ENCODE measurements at regions of chr1 and their contacts with region 1.

Region 1: DNA sequence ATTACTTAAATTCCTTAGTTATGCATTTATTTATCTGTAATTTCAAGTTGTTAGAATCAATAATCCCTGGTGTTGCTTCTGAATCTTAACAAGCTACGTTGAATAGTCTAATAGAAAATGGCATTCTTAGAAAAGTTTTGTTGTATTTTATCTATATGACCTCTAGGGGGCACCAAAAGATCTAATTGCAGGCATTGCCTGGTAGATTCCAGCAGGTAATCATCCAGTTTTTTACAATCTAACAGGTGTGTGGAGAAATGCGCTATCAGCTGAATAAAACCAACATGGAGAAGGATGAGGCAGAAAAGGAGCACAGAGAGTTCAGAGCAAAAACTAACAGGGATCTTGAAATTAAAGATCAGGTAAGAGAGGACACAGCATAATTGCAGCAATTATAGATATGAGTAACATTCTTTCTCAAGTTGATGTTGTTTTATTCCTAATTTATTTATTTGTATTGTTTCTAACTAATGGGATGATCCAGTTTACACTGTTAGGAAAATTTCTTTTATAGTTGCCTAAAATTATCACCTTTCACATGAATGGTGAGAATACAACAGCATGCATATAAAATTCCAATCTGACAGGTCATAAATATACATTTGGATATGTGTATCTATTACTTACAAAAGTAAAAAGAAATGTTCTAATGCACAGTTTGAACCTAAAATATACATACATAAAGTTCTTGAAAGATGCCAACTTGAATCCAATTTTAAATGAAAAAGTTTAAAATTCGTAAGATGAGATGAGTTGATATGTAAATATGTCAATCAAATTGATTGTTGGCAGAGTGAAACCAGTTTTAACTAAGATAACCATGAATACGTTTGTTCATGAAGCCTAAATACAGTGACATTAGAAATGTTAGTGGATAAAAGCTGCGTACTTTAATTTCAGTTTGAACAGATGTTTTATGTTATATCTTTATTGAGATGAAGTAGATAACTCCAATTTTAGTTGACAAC is 88.4 kb downstream of the SDCCAG8 start:
- DNase-seq: peak in 3 of 14 experiments; percentile 56 to 68 (median 64)
- ATAC-seq: peak; percentile 46
- H3K4me3 ChIP-seq: no peak overlapping the region
- H3K4me3 Mint-ChIP-seq: no peak overlapping the region
- H3K27ac ChIP-seq: no peak overlapping the region
- H3K27ac Mint-ChIP-seq: no peak overlapping the region
- H3K4me1 ChIP-seq: no peaks in the 10 kb centered on the region
- H3K4me1 Mint-ChIP-seq: peaks cover 4% of the 10 kb centered on the region
- H3K27me3 ChIP-seq: no peaks in the 10 kb centered on the region
- H3K27me3 Mint-ChIP-seq: no peaks in the 10 kb centered on the region
- CTCF ChIP-seq: peak; percentile 90

Region 2: GRCh38 chr1:243748706-243749283 is 404.5 kb after region 1 on chr1:
- CTCF ChIA-PET with region 1: no interaction called
- POLR2A ChIA-PET with region 1: no interaction called
- intact Hi-C with region 1: loop called (anchors 2 to 5 kb)
- DNase-seq: peak in 4 of 14 experiments; percentile 16 to 81 (median 72)
- ATAC-seq: peak; percentile 98
- H3K4me3 ChIP-seq: no peak overlapping the region
- H3K4me3 Mint-ChIP-seq: no peak overlapping the region
- H3K27ac ChIP-seq: no peak overlapping the region
- H3K27ac Mint-ChIP-seq: peak overlapping the region; percentile 52
- H3K4me1 ChIP-seq: peaks cover 2% of the 10 kb centered on the region
- H3K4me1 Mint-ChIP-seq: peaks cover 59% of the 10 kb centered on the region
- H3K27me3 ChIP-seq: no peaks in the 10 kb centered on the region
- H3K27me3 Mint-ChIP-seq: no peaks in the 10 kb centered on the region
- CTCF ChIP-seq: peak; percentile 83

Region 3: DNA sequence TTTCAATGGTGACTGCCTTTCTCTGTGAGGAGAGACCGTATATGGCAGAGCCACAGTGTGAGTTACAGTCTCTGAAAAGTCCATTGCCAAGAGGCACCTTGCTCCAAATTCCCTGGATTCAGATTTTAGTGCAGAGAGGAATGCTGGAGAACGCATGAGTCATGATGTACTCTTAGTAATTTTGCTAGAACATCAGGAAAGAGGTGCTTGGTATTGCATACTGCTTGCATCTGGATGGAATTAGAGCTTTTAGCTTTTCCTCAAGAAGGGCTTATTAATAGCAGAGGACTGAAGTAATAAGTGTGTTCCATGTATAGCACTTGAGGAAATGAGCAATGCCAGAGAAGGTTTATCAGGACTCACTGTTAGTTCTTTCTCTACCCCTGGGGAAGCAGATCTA is 546.3 kb after region 1 on chr1:
- CTCF ChIA-PET with region 1: no interaction called
- POLR2A ChIA-PET with region 1: no interaction called
- intact Hi-C with region 1: no loop called
- DNase-seq: no peak
- ATAC-seq: no peak
- H3K4me3 ChIP-seq: no peak overlapping the region
- H3K4me3 Mint-ChIP-seq: no peak overlapping the region
- H3K27ac ChIP-seq: no peak overlapping the region
- H3K27ac Mint-ChIP-seq: no peak overlapping the region
- H3K4me1 ChIP-seq: no peaks in the 10 kb centered on the region
- H3K4me1 Mint-ChIP-seq: no peaks in the 10 kb centered on the region
- H3K27me3 ChIP-seq: no peaks in the 10 kb centered on the region
- H3K27me3 Mint-ChIP-seq: peaks cover 13% of the 10 kb centered on the region
- CTCF ChIP-seq: no peak

Region 4: DNA sequence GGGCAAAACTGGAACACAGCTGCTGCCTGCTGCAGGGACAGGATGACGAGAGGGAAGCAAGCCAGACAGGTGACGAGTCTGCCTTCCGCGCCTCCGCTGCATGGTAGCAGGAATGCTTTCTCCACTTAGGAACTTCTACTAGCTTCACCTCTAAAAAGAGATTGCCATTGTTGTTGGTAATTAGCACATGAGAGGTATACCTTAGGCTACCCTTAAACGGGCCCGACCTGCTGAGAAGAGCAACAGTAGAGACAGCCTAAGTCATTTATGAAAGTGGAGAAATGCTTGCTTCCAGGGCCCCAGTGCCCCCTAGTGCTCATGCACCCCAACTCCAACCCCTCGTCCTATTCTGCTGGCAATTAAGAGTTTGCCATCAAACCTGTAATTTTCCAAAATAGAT is 602.7 kb after region 1 on chr1:
- CTCF ChIA-PET with region 1: no interaction called
- POLR2A ChIA-PET with region 1: no interaction called
- intact Hi-C with region 1: loop called (anchors 1 to 2 kb)
- DNase-seq: peak; percentile 12 to 64 (median 32)
- ATAC-seq: peak; percentile 55
- H3K4me3 ChIP-seq: no peak overlapping the region
- H3K4me3 Mint-ChIP-seq: no peak overlapping the region
- H3K27ac ChIP-seq: no peak overlapping the region
- H3K27ac Mint-ChIP-seq: no peak overlapping the region
- H3K4me1 ChIP-seq: no peaks in the 10 kb centered on the region
- H3K4me1 Mint-ChIP-seq: no peaks in the 10 kb centered on the region
- H3K27me3 ChIP-seq: no peaks in the 10 kb centered on the region
- H3K27me3 Mint-ChIP-seq: no peaks in the 10 kb centered on the region
- CTCF ChIP-seq: peak; percentile 75

Region 5: DNA sequence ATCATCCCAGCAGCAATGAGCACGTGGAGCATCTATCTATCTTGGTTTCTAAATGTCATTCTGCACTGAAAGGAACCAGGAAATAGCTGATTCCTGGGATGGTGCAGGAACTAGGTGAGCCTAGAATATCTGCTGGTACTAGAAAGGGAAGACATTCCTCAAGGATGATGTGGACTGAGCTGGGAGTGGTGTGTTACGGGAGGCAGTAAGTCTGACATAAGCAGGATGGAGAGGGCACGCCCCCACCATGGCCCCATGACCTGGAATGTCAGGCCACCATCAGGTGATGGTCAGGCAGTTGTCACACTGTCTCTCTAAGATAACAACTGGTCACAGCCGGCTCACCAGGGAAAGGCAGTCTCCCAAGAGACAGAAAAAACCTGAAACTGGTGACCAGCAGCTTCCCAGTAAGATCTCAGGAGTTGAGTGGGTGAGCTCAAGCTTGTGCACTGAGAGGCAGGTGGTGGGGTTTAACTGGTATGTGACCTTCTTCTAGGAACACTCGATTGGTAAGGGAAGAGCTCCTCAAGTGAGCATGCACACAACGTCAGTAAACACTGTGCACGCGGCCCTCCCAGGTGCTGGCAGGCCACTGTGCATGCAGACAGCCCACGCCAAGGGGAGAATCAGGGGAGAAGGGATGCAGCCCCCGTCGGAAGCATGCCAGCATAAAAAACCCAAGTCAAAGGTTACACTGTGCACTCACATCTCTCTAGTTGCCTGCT is 958.8 kb after region 1 on chr1:
- CTCF ChIA-PET with region 1: interaction called, 6 read pairs
- POLR2A ChIA-PET with region 1: no interaction called
- intact Hi-C with region 1: loop called in 1 of 2 experiments (anchors 1 kb)
- DNase-seq: no peak
- ATAC-seq: no peak
- H3K4me3 ChIP-seq: no peak overlapping the region
- H3K4me3 Mint-ChIP-seq: no peak overlapping the region
- H3K27ac ChIP-seq: no peak overlapping the region
- H3K27ac Mint-ChIP-seq: no peak overlapping the region
- H3K4me1 ChIP-seq: peaks cover 14% of the 10 kb centered on the region
- H3K4me1 Mint-ChIP-seq: peaks cover 8% of the 10 kb centered on the region
- H3K27me3 ChIP-seq: no peaks in the 10 kb centered on the region
- H3K27me3 Mint-ChIP-seq: no peaks in the 10 kb centered on the region
- CTCF ChIP-seq: no peak

Region 6: DNA sequence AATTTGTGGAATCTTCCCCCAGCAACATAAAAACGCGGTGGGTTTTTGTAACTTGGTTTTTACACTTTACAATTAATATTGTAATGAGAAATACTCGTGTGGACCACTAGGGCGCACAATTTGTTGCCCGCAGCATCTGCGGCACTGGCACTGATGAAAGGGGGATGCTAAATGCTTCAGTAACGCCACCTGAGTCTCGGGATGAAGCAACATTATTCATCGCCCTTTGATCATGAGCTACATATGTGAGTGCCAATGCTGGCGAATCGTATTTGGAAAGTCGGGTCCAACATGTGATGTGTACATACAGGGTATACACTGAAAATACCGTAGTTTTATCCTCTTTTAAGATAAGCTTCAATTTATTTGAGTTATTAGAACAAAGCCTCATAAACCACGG is 1457.0 kb after region 1 on chr1:
- CTCF ChIA-PET with region 1: no interaction called
- POLR2A ChIA-PET with region 1: no interaction called
- intact Hi-C with region 1: loop called in 1 of 2 experiments (anchors 10 kb)
- DNase-seq: peak; percentile 23 to 81 (median 46)
- ATAC-seq: peak; percentile 91
- H3K4me3 ChIP-seq: no peak overlapping the region
- H3K4me3 Mint-ChIP-seq: no peak overlapping the region
- H3K27ac ChIP-seq: no peak overlapping the region
- H3K27ac Mint-ChIP-seq: no peak overlapping the region
- H3K4me1 ChIP-seq: peaks cover 3% of the 10 kb centered on the region
- H3K4me1 Mint-ChIP-seq: peaks cover 4% of the 10 kb centered on the region
- H3K27me3 ChIP-seq: no peaks in the 10 kb centered on the region
- H3K27me3 Mint-ChIP-seq: peaks cover 4% of the 10 kb centered on the region
- CTCF ChIP-seq: peak; percentile 83

Measured in CD4-positive, alpha-beta T cell (primary cell).